Activated naive CD4-positive, alpha-beta T cell treated with anti-CD3 and anti-CD28 coated beads for 36 hours (primary cell): ENCODE measurements at regions of chr9 and their contacts with region 1.

Region 1: GRCh38 chr9:34603610-34604231 is 8.2 kb downstream of the RPP25L start:
- DNase-seq: peak; percentile 89
- H3K4me3 Mint-ChIP-seq: no peak overlapping the region
- H3K27ac Mint-ChIP-seq: no peak overlapping the region
- H3K4me1 Mint-ChIP-seq: no peaks in the 10 kb centered on the region
- H3K27me3 Mint-ChIP-seq: no peaks in the 10 kb centered on the region

Region 2: GRCh38 chr9:34403554-34404380 is 200.0 kb before region 1 on chr9:
- CTCF ChIA-PET with region 1: interaction called, 33 read pairs
- intact Hi-C with region 1: no loop called
- DNase-seq: peak; percentile 79
- H3K4me3 Mint-ChIP-seq: no peak overlapping the region
- H3K27ac Mint-ChIP-seq: no peak overlapping the region
- H3K4me1 Mint-ChIP-seq: no peaks in the 10 kb centered on the region
- H3K27me3 Mint-ChIP-seq: no peaks in the 10 kb centered on the region

Region 3: DNA sequence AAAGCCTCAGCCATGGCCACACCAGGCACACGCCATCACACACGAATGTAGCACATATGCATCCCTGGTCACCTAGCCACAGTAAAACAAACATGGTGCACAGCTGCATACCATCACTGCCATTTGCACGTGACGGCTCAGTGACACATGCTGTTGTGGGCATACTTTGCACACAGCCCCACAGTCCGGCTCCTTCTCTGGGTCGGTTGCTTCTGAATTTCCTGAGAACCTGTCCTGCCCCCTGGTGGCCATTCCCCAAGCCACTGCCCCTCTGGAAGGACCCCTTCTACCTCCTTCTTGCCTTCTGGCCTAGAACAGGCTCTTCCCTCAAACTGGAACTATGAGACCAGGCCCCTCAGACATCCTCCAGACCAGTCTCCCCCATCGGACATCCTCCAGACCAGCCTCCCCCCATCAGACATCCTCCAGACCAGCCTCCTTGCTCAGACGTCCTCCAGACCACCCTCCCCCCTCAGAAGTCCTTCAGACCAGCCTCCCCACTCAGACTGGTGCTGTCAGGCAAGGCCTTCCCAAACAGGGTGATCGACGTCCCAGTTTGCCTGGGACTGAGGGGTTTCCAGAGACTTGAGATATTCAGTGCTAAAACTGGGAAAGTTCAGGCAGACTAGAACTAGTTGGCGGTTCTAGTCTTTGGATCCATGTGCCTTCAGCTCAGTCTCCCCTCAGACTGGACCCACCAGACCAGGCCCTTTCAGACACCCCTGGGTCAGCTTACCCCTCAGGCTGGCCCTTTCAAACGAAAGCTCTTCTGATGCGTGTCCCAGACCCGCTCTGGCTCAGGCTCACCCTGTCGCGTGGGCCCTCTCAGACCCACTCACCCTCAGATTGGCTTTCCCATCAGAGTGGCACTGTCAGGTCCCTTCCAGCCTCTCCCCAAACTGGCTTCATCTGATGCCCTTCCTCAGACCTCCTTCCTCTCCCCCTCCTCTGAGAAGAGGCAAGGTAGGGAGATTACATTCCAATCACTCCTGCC is 56.6 kb before region 1 on chr9:
- CTCF ChIA-PET with region 1: interaction called, 21 read pairs
- intact Hi-C with region 1: loop called (anchors 1 kb)
- DNase-seq: peak; percentile 77
- H3K4me3 Mint-ChIP-seq: no peak overlapping the region
- H3K27ac Mint-ChIP-seq: no peak overlapping the region
- H3K4me1 Mint-ChIP-seq: no peaks in the 10 kb centered on the region
- H3K27me3 Mint-ChIP-seq: peaks cover 10% of the 10 kb centered on the region

Region 4: GRCh38 chr9:34562136-34562745 is 41.5 kb before region 1 on chr9:
- CTCF ChIA-PET with region 1: interaction called, 22 read pairs
- intact Hi-C with region 1: loop called (anchors 1 kb)
- DNase-seq: peak; percentile 50
- H3K4me3 Mint-ChIP-seq: no peak overlapping the region
- H3K27ac Mint-ChIP-seq: no peak overlapping the region
- H3K4me1 Mint-ChIP-seq: no peaks in the 10 kb centered on the region
- H3K27me3 Mint-ChIP-seq: peaks cover 23% of the 10 kb centered on the region

Region 5: DNA sequence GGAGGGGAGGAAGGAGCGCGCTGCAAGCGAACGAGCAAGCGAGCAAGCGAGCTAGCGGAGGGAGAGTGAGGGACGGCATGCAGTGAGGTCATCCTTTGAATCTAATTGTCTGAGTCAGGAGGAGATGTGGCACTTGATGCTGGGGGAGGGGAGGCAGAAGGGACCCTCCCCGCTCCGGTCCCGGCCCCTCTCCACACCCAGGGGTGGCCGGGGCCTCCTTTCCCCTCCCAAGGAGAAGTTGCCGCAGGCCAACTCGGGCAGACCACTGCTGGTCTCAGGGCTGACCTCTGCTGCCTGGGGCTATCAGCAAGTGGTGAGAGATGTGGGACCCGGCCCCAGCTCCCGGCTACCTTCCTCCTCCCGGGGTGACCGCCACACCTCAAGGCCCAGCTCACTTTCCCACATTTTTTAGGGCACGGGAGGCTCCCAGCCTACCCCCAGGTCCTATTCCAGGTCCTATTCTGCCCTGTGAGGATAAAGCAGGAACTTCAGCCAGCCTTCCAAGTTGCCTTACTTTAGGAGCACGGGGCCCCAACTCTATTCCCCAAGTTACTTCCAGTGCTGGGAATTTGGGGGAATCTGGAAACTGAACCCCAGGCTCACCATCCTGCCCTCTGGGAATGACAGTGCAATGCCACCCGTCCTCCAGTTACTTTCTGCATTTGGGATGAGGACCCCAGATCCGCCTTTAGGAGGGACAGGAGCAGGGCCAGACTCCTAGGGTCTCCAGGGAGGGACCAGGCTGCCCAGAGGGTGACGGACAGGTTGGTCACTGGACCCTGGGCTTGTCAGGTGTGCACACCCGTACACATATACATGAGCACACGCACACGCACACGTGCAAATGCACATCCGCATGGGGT is 25.2 kb before region 1 on chr9:
- CTCF ChIA-PET with region 1: interaction called, 10 read pairs
- intact Hi-C with region 1: no loop called
- DNase-seq: peak; percentile 40
- H3K4me3 Mint-ChIP-seq: no peak overlapping the region
- H3K27ac Mint-ChIP-seq: no peak overlapping the region
- H3K4me1 Mint-ChIP-seq: peaks cover 8% of the 10 kb centered on the region
- H3K27me3 Mint-ChIP-seq: peaks cover 60% of the 10 kb centered on the region

Region 6: DNA sequence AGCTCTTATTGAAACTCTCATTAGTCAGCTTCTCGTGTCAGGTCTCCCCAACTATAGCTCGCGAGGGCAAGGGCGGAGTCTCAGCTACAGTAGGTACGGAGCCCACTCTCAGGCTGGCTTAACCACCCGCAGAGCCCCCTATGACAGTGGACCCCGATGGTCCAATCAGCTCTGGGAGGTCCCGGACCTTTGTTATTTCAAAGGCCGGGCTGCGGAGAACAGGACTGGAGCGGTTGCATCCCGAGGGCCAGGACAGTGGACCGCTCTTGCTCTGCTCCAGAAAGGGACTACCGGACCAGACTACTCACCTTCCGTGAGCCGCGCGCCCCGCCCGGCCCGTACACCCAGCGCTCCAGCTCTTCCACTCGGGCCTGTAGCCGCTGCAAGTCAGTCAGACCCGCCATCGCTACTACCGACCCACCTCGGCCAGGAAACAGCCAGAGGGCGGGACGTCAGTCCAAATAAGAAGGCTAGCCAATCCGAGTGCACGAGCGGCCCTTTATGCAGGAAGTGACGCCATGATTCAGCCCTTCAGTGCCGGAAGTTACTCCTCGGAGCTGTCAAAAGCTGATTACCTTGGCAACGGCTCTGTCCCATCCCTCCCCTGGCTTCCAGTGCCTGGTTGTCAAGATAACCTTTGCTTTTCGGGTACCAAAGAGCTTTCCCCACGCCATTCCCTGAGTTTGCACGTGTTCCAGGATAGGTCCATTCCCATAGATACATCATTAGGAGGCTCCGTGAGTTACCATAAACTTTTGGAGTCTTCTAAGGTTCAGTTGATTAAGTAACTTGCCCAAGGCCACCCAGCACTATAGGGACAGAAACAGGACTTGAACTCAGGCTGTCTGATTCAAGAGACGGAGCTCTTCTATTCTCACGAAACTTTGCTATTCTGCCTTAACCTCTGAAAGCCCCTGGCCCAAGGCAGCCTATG is 16.6 kb after region 1 on chr9 and contains the start of gene DCTN3:
- CTCF ChIA-PET with region 1: interaction called, 15 read pairs
- intact Hi-C with region 1: no loop called
- DNase-seq: peak; percentile 96
- H3K4me3 Mint-ChIP-seq: peak within 1 kb of the TSS; percentile 89
- H3K27ac Mint-ChIP-seq: peak within 1 kb of the TSS; percentile 39
- H3K4me1 Mint-ChIP-seq: peaks cover 21% of the 10 kb centered on the region
- H3K27me3 Mint-ChIP-seq: peaks cover 20% of the 10 kb centered on the region
- total RNA-seq, gene DCTN3: 86.1 to 87.5 TPM